Thyroid gland (tissue), 4 donors: ENCODE measurements at regions of chr16 and their contacts with region 1.

Region 1: GRCh38 chr16:72832621-72833248 is 215.2 kb downstream of the ZFHX3 start:
- DNase-seq: peak; percentile 79 to 84
- H3K4me3 ChIP-seq: no peak overlapping the region
- H3K27ac ChIP-seq: peak overlapping the region in 1 of 3 donors; percentile 46
- H3K4me1 ChIP-seq: peaks cover 15 to 32% of the 10 kb centered on the region in 2 donors
- H3K27me3 ChIP-seq: no peaks in the 10 kb centered on the region
- CTCF ChIP-seq: peak; percentile 73 to 99 (median 92)
- POLR2A ChIP-seq: no peak

Region 2: GRCh38 chr16:72664509-72665225 is 168.1 kb before region 1 on chr16:
- intact Hi-C with region 1: loop called (anchors 10 kb)
- DNase-seq: peak; percentile 97
- H3K4me3 ChIP-seq: peak overlapping the region; percentile 59 to 72 (median 66)
- H3K27ac ChIP-seq: peak overlapping the region in 1 of 3 donors; percentile 44
- H3K4me1 ChIP-seq: peaks cover 0 to 9% of the 10 kb centered on the region in 2 donors
- H3K27me3 ChIP-seq: no peaks in the 10 kb centered on the region
- CTCF ChIP-seq: no peak
- POLR2A ChIP-seq: peak in 1 of 2 donors; percentile 43

Region 3: GRCh38 chr16:72787514-72788268 is 45.0 kb before region 1 on chr16:
- intact Hi-C with region 1: no loop called
- DNase-seq: peak; percentile 87 to 88
- H3K4me3 ChIP-seq: peak overlapping the region in 1 of 3 donors; percentile 40
- H3K27ac ChIP-seq: peak overlapping the region; percentile 88 to 92 (median 91)
- H3K4me1 ChIP-seq: peaks cover 56 to 66% of the 10 kb centered on the region in 2 donors
- H3K27me3 ChIP-seq: no peaks in the 10 kb centered on the region
- CTCF ChIP-seq: peak in 3 of 6 experiments; percentile 16 to 30 (median 17)
- POLR2A ChIP-seq: peak in 1 of 2 donors; percentile 73

Region 4: DNA sequence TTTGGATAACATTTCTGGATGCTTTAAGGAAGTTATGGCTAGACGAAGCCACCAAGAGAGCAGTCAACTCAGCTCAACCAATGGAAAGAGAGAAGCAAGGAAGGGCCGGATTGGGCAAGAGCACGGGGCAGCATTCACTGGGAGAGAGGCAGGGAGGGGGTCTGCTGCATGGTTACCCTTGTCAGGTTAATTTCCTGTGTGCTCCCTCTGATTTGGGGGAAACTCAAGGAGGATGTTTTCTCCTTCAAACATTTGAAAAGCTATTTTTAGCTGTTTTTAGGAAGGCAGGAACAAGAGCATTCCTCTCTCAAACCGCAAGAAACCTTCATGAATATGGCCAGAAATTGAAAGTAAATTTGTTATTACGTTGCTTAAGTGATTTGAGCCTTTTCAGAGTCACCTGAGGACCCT is 333.7 kb after region 1 on chr16:
- intact Hi-C with region 1: loop called (anchors 10 kb)
- DNase-seq: no peak
- H3K4me3 ChIP-seq: no peak overlapping the region
- H3K27ac ChIP-seq: no peak overlapping the region
- H3K4me1 ChIP-seq: peaks cover 0 to 4% of the 10 kb centered on the region in 2 donors
- H3K27me3 ChIP-seq: no peaks in the 10 kb centered on the region
- CTCF ChIP-seq: no peak
- POLR2A ChIP-seq: no peak

Region 5: DNA sequence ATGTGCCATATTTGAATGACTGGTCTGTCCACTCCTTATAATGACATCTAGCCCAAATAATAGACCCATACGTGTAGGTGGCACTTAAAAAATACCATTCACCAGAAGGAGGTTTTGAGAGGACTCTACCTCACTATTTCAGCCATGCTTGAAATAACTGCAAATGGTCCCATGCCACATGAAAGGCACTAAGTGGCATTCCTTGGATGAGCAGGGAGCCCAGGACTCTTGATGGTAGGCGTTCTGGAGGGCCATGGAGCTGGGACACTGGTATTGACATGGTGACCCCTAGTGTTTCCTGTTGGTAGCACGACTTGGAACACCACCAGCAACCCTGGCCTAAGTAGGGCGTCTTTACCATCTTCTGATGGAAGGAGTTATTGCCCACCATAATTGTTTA is 363.9 kb after region 1 on chr16:
- intact Hi-C with region 1: loop called (anchors 10 kb)
- DNase-seq: peak; percentile 65 to 71
- H3K4me3 ChIP-seq: no peak overlapping the region
- H3K27ac ChIP-seq: no peak overlapping the region
- H3K4me1 ChIP-seq: peaks cover 0 to 7% of the 10 kb centered on the region in 2 donors
- H3K27me3 ChIP-seq: no peaks in the 10 kb centered on the region
- CTCF ChIP-seq: peak in 5 of 6 experiments; percentile 28 to 59 (median 53)
- POLR2A ChIP-seq: no peak